ENCODE measurements at regions of chr10 and their contacts with region 1.

Region 1: DNA sequence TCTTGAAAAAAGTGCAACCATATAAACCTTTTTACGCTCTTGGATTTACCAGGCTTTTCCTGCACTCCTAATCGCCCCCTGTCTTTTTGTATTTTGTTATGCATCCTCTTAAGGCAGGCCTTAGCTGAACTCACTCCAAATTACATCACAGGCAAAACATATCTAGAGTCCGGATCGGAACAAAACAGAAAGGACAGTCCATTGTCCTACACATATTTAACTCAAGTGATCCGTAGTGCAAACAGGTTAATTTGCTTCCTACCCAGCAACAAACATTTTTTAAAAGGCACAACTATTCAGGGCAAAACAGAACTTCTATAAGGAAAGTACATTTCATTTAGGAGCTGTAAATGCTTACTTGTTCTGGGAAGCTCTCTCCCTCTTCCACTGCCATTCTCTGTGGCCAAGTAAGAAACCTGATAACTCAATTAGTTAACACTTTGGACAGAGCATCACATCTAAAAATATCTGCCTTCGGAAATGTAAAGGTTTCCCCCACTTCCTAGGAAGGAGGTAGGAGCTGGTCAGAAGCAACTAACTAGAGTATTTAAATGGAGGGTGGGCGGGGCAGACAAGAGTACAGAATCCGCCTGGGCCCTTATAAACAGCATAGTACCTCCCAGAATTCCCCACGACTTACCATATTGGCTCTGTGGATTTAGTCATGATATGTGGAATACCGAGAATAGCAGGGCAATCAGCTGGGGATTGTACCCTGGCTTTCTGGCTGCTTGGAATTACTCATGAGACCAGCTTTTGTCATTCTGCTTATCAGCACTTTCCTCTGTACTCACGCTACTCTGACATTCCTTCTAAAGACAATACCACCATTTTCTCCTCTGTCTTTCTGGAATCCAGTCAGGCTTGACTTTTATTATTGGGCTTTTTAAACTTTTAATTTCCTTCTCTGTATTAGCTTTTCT is 89.5 kb downstream of the ANK3 start:
- DNase-seq: peak in 1 of 2 donors; percentile 59
- ATAC-seq: peak; percentile 75 to 93 (median 90)
- H3K4me3 ChIP-seq: peak overlapping the region; percentile 1 to 59 (median 49)
- H3K27ac ChIP-seq: peak overlapping the region; percentile 36 to 86 (median 74)
- H3K4me1 ChIP-seq: peaks cover 0 to 27% (median 6%) of the 10 kb centered on the region in 9 donors
- H3K27me3 ChIP-seq: no peaks in the 10 kb centered on the region
- CTCF ChIP-seq: peak in 6 of 9 donors; percentile 9 to 43 (median 30)

Region 2: DNA sequence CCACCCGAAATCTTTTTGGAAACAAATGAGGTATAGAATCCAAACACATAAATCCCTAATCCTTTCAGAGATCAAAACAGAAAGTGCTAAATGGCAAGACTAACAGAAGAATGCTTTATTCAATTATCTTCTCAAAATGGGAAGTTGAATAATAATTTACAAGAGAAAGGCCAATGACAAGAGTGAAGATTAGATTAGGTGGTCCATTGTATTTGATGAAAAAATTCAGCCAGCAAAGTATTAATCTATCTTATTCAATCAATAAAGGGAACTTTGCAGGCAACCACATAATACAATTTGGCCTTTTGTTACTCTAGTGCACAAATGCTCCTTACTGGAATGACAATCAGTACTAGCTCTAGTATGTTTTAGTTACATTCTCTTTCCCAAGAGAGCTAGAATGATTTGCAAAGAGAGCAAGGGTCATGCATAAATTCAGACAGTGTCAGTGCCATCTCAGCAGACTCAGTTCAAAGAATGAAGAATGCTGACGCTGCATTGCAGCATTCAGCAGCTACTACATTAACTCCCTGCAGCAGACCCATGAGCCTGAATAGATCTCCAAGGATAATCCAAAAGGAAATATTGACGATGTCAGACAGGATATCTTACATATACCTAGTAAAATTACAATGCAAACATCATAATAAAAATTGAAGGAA is 42.3 kb before region 1 on chr10:
- intact Hi-C with region 1: no loop called
- DNase-seq: no peak
- ATAC-seq: no peak
- H3K4me3 ChIP-seq: no peak overlapping the region
- H3K27ac ChIP-seq: no peak overlapping the region
- H3K4me1 ChIP-seq: peaks cover 0 to 14% (median 0%) of the 10 kb centered on the region in 9 donors
- H3K27me3 ChIP-seq: no peaks in the 10 kb centered on the region
- CTCF ChIP-seq: no peak

Region 3: DNA sequence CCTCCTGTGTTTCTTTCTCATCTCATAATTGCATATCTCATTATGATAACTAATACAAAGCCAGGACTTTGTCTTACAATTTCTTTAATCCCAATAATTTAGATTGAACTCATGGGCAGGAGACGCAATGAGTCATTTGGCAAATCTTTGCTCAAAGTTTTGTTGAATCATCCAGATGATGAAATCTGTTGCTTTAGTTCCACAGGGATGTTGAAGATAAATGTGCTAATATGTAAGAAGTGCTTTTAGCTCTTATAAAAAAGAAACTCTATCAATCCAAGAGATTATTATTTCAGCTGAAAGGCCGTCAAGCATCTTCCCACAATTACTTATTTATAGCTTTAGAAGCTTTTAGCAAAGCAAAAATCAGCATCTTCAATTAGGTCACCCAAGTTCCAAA is 126.2 kb after region 1 on chr10:
- intact Hi-C with region 1: loop called in 2 of 10 experiments (anchors 10 kb)
- DNase-seq: no peak
- ATAC-seq: no peak
- H3K4me3 ChIP-seq: no peak overlapping the region
- H3K27ac ChIP-seq: no peak overlapping the region
- H3K4me1 ChIP-seq: peaks cover 0 to 41% (median 28%) of the 10 kb centered on the region in 9 donors
- H3K27me3 ChIP-seq: no peaks in the 10 kb centered on the region
- CTCF ChIP-seq: no peak